Spleen (tissue), 13 donors: ENCODE measurements at regions of chr5 and their contacts with region 1.

Region 1: DNA sequence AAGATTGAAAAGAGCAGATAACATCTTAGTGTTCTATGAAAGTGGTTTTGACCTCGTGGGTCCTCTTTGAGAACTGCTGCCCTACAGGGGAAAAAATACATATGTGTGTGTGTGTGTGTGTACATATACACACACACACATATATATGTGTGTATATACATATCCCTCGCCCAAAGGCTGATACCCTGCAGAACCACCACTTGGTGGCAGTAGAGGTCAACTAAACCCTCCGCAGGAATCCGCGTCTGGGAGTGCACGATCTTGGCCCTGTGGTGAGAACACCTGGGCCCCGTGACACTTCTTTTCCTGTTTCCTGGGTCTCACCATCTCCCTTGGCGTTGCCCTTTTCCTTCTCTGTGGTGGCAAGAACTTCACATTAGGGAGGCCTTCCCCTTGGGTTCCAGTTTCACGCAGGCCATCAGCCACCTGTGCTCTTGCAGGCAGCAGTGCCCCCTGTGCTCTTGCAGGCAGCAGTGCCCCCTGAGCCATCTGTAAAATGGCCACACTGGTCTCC is 8.2 kb downstream of the IL9 start:
- DNase-seq: no peak
- H3K4me3 ChIP-seq: peak overlapping the region in 1 of 8 donors; percentile 41
- H3K27ac ChIP-seq: no peak overlapping the region
- H3K4me1 ChIP-seq: peaks cover 0 to 6% (median 5%) of the 10 kb centered on the region in 6 donors
- H3K27me3 ChIP-seq: peaks cover 0 to 37% (median 0%) of the 10 kb centered on the region in 7 donors
- CTCF ChIP-seq: peak; percentile 53 to 89 (median 81)
- POLR2A ChIP-seq: no peak

Region 2: DNA sequence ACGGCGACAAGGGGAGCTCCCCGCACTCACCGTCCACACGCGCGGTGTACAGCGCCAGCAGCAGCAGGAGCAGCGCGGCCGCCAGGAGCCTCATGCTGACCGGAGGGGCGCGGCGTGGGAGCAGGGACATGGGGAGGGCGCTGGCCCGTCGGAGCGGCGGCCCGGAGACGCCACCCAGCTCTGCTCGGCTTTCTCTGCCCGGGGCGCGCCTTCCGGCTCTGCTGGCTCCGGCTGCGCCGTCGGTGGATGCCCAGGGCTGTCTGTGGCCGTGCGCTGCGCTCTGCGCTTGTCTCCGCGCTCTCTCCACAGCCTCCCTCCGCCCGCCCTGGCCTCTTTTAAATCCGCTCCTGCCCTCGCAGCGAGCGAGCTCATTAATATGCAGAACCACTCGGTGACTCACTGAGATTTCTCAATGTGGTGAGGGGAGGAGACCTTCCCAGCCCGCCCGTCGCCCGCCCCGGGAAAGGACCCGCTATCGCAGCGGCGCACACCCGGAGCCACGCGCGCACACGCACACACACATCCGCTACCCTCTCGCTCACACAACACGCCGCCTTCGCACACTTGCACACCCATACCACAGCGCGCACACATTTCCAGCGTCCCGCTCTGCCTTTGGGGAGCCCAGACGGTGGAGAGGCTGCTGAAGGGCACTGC is 308.6 kb before region 1 on chr5 and contains the start of gene CXCL14:
- intact Hi-C with region 1: no loop called
- DNase-seq: peak; percentile 69
- H3K4me3 ChIP-seq: peak within 1 kb of the TSS; percentile 18 to 59 (median 30)
- H3K27ac ChIP-seq: peak within 1 kb of the TSS in 6 of 8 donors; percentile 25 to 70 (median 59)
- H3K4me1 ChIP-seq: peaks cover 0 to 18% (median 7%) of the 10 kb centered on the region in 6 donors
- H3K27me3 ChIP-seq: peaks cover 0 to 83% (median 40%) of the 10 kb centered on the region in 7 donors
- CTCF ChIP-seq: no peak
- POLR2A ChIP-seq: no peak
- total RNA-seq, gene CXCL14: 10.3 to 67.1 (median 42.4) TPM

Region 3: GRCh38 chr5:136212252-136212721 is 324.9 kb after region 1 on chr5:
- intact Hi-C with region 1: loop called (anchors 5 kb)
- DNase-seq: peak; percentile 80
- H3K4me3 ChIP-seq: no peak overlapping the region
- H3K27ac ChIP-seq: no peak overlapping the region
- H3K4me1 ChIP-seq: peaks cover 0 to 4% (median 0%) of the 10 kb centered on the region in 6 donors
- H3K27me3 ChIP-seq: peaks cover 0 to 80% (median 9%) of the 10 kb centered on the region in 7 donors
- CTCF ChIP-seq: peak; percentile 25 to 84 (median 72)
- POLR2A ChIP-seq: no peak